ENCODE measurements at regions of chr11 and their contacts with region 1.

Region 1: GRCh38 chr11:5796541-5796940 is 5.5 kb upstream of the OR52N1 start:
- DNase-seq: no peak
- H3K4me3 ChIP-seq: no peak overlapping the region
- H3K27ac ChIP-seq: no peak overlapping the region
- H3K4me1 ChIP-seq: no peaks in the 10 kb centered on the region
- H3K27me3 ChIP-seq: no peaks in the 10 kb centered on the region
- CTCF ChIP-seq: no peak

Region 2: GRCh38 chr11:5726351-5726750 is 70.2 kb before region 1 on chr11:
- intact Hi-C with region 1: no loop called
- DNase-seq: no peak
- H3K4me3 ChIP-seq: no peak overlapping the region
- H3K27ac ChIP-seq: no peak overlapping the region
- H3K4me1 ChIP-seq: no peaks in the 10 kb centered on the region
- H3K27me3 ChIP-seq: no peaks in the 10 kb centered on the region
- CTCF ChIP-seq: no peak

Region 3: DNA sequence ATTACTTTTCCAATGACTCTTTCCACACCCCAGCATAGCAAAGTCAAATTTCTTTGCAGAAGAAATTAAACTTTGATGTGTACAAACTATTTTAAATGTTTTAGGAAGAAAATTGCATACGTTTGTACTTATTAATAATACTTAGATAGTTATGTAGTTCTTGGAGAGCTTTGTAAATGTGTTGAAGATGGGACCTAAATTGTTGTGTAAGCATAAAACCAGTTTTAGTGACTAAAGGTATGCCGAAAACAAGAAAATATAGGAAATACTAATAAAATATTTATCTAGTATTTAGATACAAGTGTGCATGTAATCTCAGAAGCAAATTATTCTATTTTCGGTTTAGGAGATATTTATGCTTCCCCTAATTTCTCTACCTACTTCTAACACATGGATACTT is 46.7 kb before region 1 on chr11:
- intact Hi-C with region 1: loop called (anchors 5 kb)
- DNase-seq: no peak
- H3K4me3 ChIP-seq: no peak overlapping the region
- H3K27ac ChIP-seq: no peak overlapping the region
- H3K4me1 ChIP-seq: no peaks in the 10 kb centered on the region
- H3K27me3 ChIP-seq: no peaks in the 10 kb centered on the region
- CTCF ChIP-seq: no peak

Region 4: GRCh38 chr11:5891216-5891800 is 94.8 kb after region 1 on chr11:
- intact Hi-C with region 1: no loop called
- DNase-seq: peak in 1 of 5 donors; percentile 9
- H3K4me3 ChIP-seq: no peak overlapping the region
- H3K27ac ChIP-seq: no peak overlapping the region
- H3K4me1 ChIP-seq: no peaks in the 10 kb centered on the region
- H3K27me3 ChIP-seq: no peaks in the 10 kb centered on the region
- CTCF ChIP-seq: no peak

Measured in kidney (tissue), 22 donors.